Calu3 (cell line): ENCODE measurements at regions of chr3 and their contacts with region 1.

Region 1: DNA sequence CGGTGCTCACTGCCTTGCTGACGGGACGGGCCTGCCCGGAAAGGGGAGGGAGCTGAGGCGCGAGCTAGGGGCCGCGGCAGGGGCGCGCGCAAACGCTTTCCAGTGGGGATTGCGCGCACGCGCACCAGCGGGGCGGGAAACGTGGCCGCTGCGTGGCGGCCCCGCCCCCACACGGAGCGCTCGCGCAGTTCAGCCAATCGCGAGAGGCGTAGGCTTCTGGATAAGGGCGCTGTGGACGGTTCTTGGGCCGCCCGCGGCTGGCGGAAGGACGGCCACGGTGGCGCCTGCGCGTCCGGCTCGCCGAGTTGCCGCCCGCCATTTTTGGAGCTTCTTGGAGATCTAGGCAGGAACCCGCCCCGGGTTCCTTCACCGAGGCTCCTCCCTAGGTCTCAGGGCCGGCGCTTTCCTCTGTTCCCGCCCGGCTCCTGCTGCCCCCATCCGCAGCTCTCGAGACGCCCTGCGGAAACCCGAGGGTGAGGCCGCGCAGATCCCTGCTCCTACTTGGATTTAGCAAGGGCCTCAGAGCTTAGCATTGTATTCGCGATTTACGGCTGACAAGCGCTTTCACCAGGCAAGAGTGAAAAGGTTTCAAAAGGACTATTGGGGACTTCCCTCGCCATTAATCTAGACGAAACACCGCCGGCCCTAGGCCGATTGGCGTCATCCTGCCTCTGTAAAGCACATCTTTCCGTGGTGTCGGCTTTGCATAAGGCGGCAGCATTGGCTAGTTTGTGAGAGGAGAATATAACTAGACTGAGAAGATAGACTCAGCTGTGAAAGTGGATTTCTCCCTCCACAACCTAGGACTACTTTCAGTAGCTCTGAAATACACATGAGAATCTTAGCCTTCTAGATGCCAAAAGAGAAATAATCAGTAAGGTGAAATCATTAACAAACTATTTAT is 496 bp upstream of the STAG1 start:
- DNase-seq: peak; percentile 100
- H3K4me3 Mint-ChIP-seq: peak overlapping the region; percentile 73
- H3K27ac Mint-ChIP-seq: peak overlapping the region; percentile 67
- H3K4me1 Mint-ChIP-seq: peaks cover 44% of the 10 kb centered on the region
- H3K27me3 Mint-ChIP-seq: no peaks in the 10 kb centered on the region
- CTCF ChIP-seq: no peak

Region 2: DNA sequence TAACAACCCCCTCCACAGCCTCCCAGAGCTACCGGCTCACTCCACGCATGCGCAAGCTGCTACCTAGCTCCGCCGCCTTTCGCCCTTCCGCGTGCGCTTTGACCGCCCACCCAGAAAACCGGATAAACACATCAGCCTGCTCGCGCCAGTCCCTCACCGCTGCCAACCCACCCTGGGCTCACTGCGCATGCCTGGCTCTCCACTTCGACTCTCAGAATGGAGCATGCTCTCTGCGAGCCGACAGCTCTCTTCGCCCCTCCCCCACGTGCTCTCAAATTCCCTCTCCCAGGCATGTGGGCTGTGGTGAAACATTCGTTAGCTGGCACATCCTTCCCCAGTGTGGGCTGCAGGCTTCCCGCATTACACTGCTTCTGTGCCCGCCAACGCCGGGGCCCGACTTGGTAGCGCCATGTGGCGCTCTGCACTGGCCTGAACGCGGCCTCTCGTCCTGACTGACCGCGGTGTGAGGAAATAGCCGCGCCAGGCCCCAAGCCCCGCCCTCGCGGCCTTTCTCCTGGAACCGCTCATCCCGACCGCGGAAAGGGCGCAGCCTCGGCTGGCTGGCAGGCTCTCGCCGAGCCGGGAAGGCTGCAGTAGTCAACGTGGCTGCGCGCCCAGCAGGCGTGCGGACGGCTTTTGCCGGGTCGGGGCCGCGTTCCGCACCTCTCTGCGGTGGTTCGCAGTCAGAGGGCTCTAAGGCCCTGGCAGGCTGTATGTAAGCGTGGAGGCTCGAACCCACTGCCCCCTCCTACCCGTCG is 556.1 kb before region 1 on chr3:
- CTCF ChIA-PET with region 1: interaction called, 8 read pairs
- intact Hi-C with region 1: loop called (anchors 5 kb)
- DNase-seq: peak; percentile 100
- H3K4me3 Mint-ChIP-seq: peak overlapping the region; percentile 78
- H3K27ac Mint-ChIP-seq: peak overlapping the region; percentile 91
- H3K4me1 Mint-ChIP-seq: peaks cover 19% of the 10 kb centered on the region
- H3K27me3 Mint-ChIP-seq: no peaks in the 10 kb centered on the region
- CTCF ChIP-seq: no peak

Region 3: DNA sequence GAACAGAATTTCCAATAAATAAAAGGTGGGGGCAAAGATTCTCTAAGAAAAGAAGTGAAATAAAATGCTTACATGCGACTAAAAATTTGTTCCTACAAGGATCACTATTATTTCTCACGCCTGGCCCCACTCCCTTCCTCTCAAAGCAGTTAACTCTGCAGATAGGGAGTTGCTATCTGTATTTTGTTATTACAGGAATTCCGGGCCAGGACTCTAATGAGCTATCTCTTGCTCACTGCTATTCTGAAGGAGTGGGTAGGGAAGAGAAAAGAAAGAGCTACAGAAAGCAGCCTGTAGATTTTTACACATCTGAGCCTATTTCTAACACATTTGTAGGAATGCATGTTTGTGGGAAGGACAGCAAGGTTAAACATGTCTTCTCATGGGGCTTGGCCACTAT is 362.1 kb before region 1 on chr3:
- CTCF ChIA-PET with region 1: interaction called, 113 read pairs
- intact Hi-C with region 1: loop called (anchors 1 kb)
- DNase-seq: no peak
- H3K4me3 Mint-ChIP-seq: no peak overlapping the region
- H3K27ac Mint-ChIP-seq: no peak overlapping the region
- H3K4me1 Mint-ChIP-seq: no peaks in the 10 kb centered on the region
- H3K27me3 Mint-ChIP-seq: no peaks in the 10 kb centered on the region
- CTCF ChIP-seq: no peak

Region 4: GRCh38 chr3:136624894-136625815 is 127.5 kb before region 1 on chr3:
- CTCF ChIA-PET with region 1: interaction called, 17 read pairs
- intact Hi-C with region 1: loop called (anchors 1 kb)
- DNase-seq: peak; percentile 84
- H3K4me3 Mint-ChIP-seq: peak overlapping the region; percentile 66
- H3K27ac Mint-ChIP-seq: peak overlapping the region; percentile 97
- H3K4me1 Mint-ChIP-seq: peaks cover 71% of the 10 kb centered on the region
- H3K27me3 Mint-ChIP-seq: no peaks in the 10 kb centered on the region
- CTCF ChIP-seq: no peak

Region 5: DNA sequence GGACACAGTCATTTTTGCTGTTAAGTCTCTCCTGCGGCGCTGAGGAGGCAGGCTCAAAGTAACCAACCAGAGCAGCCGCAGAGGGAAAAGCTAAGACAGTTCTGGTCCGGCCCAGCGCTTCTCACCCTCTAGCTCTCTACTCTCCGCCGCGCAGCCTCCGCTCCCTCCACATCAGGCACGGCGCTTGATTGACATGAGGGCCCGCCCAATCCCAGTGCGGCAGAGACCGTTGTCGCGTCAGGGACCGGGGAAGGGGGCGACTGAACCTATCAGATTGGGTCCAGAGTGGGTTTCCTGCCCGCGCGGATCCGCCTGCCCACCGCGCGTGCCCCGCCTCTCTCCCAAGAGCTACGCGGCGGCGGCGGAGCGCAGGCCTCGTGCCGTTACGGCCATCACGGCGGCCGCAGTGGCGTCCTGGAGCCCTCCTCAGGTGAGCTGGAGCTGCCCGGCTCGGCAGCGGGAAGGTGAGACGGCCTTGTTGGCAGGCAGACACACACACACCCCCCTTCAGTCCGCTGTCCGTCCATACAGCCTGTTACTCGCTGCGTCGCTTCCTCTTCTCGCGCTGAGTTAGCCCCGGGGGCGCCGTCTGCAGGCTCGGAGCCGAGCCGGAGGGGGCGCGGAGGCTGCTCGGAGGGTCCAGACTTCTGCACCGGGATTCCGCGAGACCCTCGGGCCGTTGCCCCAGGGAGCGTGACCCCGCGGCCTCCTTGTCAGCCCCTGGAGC is 109.4 kb after region 1 on chr3 and contains the start of gene NCK1:
- CTCF ChIA-PET with region 1: interaction called, 54 read pairs
- intact Hi-C with region 1: loop called (anchors 1 kb)
- DNase-seq: peak; percentile 100
- H3K4me3 Mint-ChIP-seq: peak within 1 kb of the TSS; percentile 99
- H3K27ac Mint-ChIP-seq: peak within 1 kb of the TSS; percentile 89
- H3K4me1 Mint-ChIP-seq: peaks cover 47% of the 10 kb centered on the region
- H3K27me3 Mint-ChIP-seq: no peaks in the 10 kb centered on the region
- CTCF ChIP-seq: no peak
- total RNA-seq, gene NCK1: 108 and 127 TPM in 2 replicates

Region 6: GRCh38 chr3:137013955-137014688 is 261.4 kb after region 1 on chr3:
- CTCF ChIA-PET with region 1: interaction called, 147 read pairs
- intact Hi-C with region 1: loop called (anchors 1 kb)
- DNase-seq: peak; percentile 97
- H3K4me3 Mint-ChIP-seq: peak overlapping the region; percentile 68
- H3K27ac Mint-ChIP-seq: peak overlapping the region; percentile 34
- H3K4me1 Mint-ChIP-seq: peaks cover 14% of the 10 kb centered on the region
- H3K27me3 Mint-ChIP-seq: no peaks in the 10 kb centered on the region
- CTCF ChIP-seq: peak; percentile 97